Breast epithelium (tissue), 4 donors: ENCODE measurements at regions of chr4 and their contacts with region 1.

Region 1: DNA sequence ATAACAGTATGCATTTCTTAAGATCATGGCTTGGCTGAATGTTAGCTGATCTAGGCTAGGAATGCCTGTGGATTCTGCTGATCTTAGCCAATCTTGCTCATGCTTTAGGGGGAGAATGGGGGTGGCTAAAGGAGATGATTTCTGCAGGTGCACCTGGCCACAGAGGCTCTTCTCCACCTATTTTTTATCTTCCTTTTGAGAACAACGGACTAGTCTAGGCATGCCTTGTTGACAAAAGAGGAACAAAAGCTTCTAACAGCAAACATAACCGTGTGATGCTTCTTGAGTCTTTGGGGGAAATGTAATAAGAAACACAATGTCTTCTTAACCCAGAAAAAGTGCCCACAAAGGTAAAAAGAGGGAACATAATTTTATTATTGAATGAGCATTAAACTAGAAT is 743.5 kb downstream of the ARAP2 start:
- DNase-seq: no peak
- H3K4me3 ChIP-seq: no peak overlapping the region
- H3K27ac ChIP-seq: no peak overlapping the region
- H3K4me1 ChIP-seq: no peaks in the 10 kb centered on the region
- H3K27me3 ChIP-seq: no peaks in the 10 kb centered on the region
- CTCF ChIP-seq: no peak
- POLR2A ChIP-seq: no peak

Region 2: DNA sequence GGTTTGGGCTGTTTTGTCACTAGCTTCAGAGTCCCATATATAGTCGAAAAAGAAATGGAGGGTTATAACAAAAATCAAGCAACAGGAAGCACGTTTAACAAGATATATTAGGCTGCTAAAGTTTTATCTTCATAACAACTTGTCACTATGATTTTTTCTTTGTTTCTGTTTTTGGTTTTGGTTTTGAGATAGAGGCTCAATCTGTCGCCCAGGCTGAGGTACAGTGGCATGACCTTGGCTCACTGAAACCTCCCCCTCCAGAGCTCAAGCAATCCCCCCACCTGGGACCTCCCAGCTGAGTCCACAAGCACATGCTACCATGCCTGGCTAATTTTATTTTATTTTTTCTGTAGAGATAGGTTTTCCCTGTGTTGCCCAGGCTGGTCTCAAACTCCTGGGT is 1920.9 kb before region 1 on chr4:
- intact Hi-C with region 1: loop called (anchors 10 kb)
- DNase-seq: no peak
- H3K4me3 ChIP-seq: no peak overlapping the region
- H3K27ac ChIP-seq: no peak overlapping the region
- H3K4me1 ChIP-seq: no peaks in the 10 kb centered on the region
- H3K27me3 ChIP-seq: no peaks in the 10 kb centered on the region
- CTCF ChIP-seq: no peak
- POLR2A ChIP-seq: no peak

Region 3: GRCh38 chr4:35038081-35038805 is 462.6 kb before region 1 on chr4:
- intact Hi-C with region 1: no loop called
- DNase-seq: no peak
- H3K4me3 ChIP-seq: no peak overlapping the region
- H3K27ac ChIP-seq: no peak overlapping the region
- H3K4me1 ChIP-seq: no peaks in the 10 kb centered on the region
- H3K27me3 ChIP-seq: no peaks in the 10 kb centered on the region
- CTCF ChIP-seq: no peak
- POLR2A ChIP-seq: no peak

Region 4: GRCh38 chr4:35548921-35549320 is 48.1 kb after region 1 on chr4:
- intact Hi-C with region 1: no loop called
- DNase-seq: no peak
- H3K4me3 ChIP-seq: no peak overlapping the region
- H3K27ac ChIP-seq: no peak overlapping the region
- H3K4me1 ChIP-seq: no peaks in the 10 kb centered on the region
- H3K27me3 ChIP-seq: no peaks in the 10 kb centered on the region
- CTCF ChIP-seq: no peak
- POLR2A ChIP-seq: no peak

Region 5: DNA sequence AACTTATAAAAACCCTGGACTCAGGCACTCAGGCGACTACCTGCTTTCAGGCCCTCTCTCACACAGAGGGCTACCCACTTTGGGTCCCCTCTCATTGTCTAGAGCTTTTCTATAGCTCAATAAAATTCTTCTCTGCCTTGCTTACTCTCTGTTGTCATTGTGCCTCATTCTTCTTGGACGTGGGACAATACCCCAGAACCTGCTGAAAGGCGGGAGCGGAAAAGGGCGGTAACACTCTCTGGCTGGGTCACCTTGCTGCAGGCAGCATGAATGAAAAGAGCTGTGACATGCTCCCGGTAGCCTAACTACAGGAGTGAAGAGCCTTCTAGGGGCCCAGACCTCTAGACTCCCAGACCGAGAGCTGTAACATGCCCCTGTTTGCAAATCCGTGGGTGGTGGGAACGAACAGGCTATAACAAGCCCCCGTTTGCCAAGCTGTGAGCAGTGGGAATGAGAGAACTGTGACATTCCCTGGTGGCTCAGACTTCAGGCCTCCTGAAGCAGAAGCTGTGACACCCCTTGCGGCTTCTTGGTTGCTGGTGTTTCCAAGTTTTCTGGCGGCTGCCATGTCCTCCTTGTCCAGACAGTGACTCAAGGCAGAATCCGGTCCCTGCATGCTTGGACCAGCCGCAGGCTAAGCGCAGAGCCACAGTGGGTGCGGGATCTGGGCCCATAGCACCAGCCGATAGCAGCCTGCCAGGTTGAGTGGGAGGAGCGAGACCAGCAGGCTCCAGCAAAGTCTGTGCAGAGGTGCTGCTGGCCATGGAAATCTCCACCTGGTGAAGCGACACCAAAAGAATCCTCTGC is 59.0 kb after region 1 on chr4:
- intact Hi-C with region 1: no loop called
- DNase-seq: no peak
- H3K4me3 ChIP-seq: no peak overlapping the region
- H3K27ac ChIP-seq: no peak overlapping the region
- H3K4me1 ChIP-seq: no peaks in the 10 kb centered on the region
- H3K27me3 ChIP-seq: no peaks in the 10 kb centered on the region
- CTCF ChIP-seq: no peak
- POLR2A ChIP-seq: no peak